Thyroid gland (tissue), 4 donors: ENCODE measurements at regions of chr5 and their contacts with region 1.

Region 1: GRCh38 chr5:154077696-154078095 is 38.9 kb downstream of the MFAP3 start:
- DNase-seq: peak in 1 of 2 donors; percentile 10
- H3K4me3 ChIP-seq: no peak overlapping the region
- H3K27ac ChIP-seq: no peak overlapping the region
- H3K4me1 ChIP-seq: peaks cover 12 to 28% of the 10 kb centered on the region in 2 donors
- H3K27me3 ChIP-seq: no peaks in the 10 kb centered on the region
- CTCF ChIP-seq: no peak
- POLR2A ChIP-seq: no peak

Region 2: DNA sequence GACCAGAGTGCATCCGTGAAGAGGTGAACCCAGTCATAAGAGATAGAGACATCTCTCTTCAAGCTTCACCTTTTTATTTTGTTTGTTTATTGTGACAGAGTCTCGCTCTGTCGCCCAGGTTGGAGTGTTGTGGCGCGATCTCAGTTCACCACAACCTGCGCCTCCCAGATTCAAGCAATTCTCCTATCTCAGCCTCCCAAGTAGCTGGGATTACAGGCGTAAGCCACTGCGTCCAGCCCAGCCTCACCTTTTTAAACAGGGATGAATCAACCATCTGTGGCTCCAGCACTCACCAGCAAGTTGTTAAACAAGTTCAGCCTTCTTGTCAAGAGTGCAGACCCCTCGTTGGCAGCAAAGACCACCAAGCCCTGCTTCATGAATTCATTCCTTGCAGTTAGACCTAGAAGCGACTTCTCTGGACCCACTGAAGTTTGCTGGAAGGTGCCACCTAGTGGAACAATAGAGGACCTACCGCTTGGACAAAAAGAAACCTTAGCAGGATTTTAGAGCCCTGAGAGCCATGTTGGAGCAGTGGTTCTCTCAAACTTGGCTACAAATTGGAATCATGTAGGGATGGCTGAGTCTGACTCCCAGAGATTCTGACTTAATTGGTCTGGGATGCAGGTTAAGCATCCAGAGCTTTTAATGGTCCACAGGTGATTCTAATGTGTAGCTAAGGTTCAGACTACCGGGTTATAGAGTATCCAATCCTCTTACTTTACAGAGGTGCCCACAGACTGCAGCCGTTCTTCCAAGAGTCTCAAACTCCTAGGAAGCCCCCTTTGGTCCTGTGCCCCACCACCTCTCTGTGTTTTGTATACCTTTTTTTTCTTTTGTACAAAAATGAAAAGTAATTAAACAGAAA is 102.4 kb after region 1 on chr5:
- intact Hi-C with region 1: loop called (anchors 5 kb)
- DNase-seq: peak in 1 of 2 donors; percentile 39
- H3K4me3 ChIP-seq: no peak overlapping the region
- H3K27ac ChIP-seq: no peak overlapping the region
- H3K4me1 ChIP-seq: no peaks in the 10 kb centered on the region
- H3K27me3 ChIP-seq: no peaks in the 10 kb centered on the region
- CTCF ChIP-seq: peak; percentile 39 to 84 (median 74)
- POLR2A ChIP-seq: no peak

Region 3: DNA sequence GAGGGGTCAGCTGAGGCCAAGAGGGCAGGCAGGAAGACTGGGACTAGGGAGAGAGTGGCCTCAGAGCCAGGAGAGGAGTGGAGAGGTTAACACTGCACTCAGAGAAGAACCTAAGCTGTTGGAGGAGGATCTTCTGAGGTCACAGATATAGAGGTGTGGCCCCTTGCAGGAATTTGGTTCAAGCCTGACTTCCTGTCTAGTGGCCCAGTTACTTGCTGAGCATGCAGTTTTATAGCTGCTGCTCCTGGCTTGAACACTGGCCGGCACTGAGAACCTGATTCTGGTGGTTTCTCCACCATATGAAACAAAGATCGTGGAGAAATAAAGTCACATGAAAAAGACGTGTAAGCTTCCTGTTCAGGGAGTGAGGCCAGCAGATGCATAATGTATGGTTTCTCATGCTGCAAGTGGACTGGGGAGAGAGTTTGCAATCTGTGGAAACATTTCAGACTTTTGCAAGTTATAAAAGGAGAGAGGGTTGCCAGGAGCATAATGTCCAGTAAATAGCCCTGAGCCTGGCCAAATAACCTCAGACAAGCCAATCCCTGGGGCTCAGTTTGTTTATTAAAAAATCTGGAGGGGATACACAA is 195.4 kb after region 1 on chr5:
- intact Hi-C with region 1: no loop called
- DNase-seq: peak; percentile 71 to 79
- H3K4me3 ChIP-seq: no peak overlapping the region
- H3K27ac ChIP-seq: peak overlapping the region; percentile 50 to 64 (median 59)
- H3K4me1 ChIP-seq: peaks cover 36 to 37% of the 10 kb centered on the region in 2 donors
- H3K27me3 ChIP-seq: no peaks in the 10 kb centered on the region
- CTCF ChIP-seq: no peak
- POLR2A ChIP-seq: peak in 1 of 2 donors; percentile 36